ENCODE measurements at regions of chr21 and their contacts with region 1.

Region 1: GRCh38 chr21:23394458-23394857 is 2212.8 kb downstream of the MRPL39 start:
- DNase-seq: peak; percentile 25
- ATAC-seq: peak; percentile 40
- H3K4me3 ChIP-seq: no peak overlapping the region
- H3K27ac ChIP-seq: no peak overlapping the region
- H3K4me1 ChIP-seq: no peaks in the 10 kb centered on the region
- H3K27me3 ChIP-seq: no peaks in the 10 kb centered on the region
- CTCF ChIP-seq: peak; percentile 61

Region 2: DNA sequence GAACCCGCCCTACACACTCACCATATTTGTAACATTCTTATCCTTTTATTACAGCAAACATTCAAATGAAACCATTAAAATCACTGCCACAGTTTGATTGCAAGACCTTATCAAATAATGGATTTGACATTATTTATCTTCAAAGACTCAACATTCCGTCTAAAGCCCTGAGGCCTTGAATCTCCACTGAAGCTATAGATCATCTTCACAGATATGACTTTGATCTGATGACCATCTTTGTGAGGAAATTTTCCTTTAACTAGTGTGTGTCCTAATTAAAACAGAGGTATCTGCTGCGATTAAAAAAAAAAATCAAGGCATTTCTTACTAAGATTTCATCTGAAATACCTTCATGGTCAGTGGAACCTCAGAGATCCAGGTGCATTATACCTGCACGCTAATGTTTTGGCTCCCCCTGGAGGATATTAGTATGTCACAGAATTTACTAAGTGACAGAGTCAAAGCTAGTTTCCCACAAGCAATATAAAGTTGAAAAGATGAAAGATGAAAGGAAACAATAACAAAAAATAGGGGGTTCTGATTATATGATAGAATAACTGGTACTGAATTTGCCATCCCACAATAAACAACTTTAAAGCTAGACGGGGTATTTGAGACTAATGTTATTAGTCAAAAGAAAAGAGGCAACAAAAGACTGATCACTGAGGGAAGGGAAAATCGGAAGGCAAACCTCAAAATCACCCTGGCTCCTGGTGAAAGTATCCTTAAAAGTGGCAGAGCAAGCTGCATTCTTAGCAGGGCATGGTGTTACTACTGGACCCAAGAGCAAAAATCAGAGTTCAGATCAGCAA is 1472.8 kb before region 1 on chr21:
- CTCF ChIA-PET with region 1: no interaction called
- POLR2A ChIA-PET with region 1: no interaction called
- intact Hi-C with region 1: loop called (anchors 10 kb)
- DNase-seq: peak; percentile 65
- ATAC-seq: peak; percentile 64
- H3K4me3 ChIP-seq: peak overlapping the region; percentile 33
- H3K27ac ChIP-seq: no peak overlapping the region
- H3K4me1 ChIP-seq: no peaks in the 10 kb centered on the region
- H3K27me3 ChIP-seq: no peaks in the 10 kb centered on the region
- CTCF ChIP-seq: peak; percentile 88

Region 3: GRCh38 chr21:22575165-22575584 is 819.3 kb before region 1 on chr21:
- CTCF ChIA-PET with region 1: no interaction called
- POLR2A ChIA-PET with region 1: no interaction called
- intact Hi-C with region 1: loop called (anchors 5 kb)
- DNase-seq: peak; percentile 47
- ATAC-seq: peak; percentile 85
- H3K4me3 ChIP-seq: peak overlapping the region; percentile 43
- H3K27ac ChIP-seq: no peak overlapping the region
- H3K4me1 ChIP-seq: no peaks in the 10 kb centered on the region
- H3K27me3 ChIP-seq: no peaks in the 10 kb centered on the region
- CTCF ChIP-seq: peak; percentile 75

Region 4: GRCh38 chr21:23131171-23131570 is 263.3 kb before region 1 on chr21:
- CTCF ChIA-PET with region 1: no interaction called
- POLR2A ChIA-PET with region 1: no interaction called
- intact Hi-C with region 1: loop called (anchors 2 kb)
- DNase-seq: peak; percentile 45
- ATAC-seq: peak; percentile 60
- H3K4me3 ChIP-seq: no peak overlapping the region
- H3K27ac ChIP-seq: no peak overlapping the region
- H3K4me1 ChIP-seq: peaks cover 7% of the 10 kb centered on the region
- H3K27me3 ChIP-seq: no peaks in the 10 kb centered on the region
- CTCF ChIP-seq: peak; percentile 67

Region 5: DNA sequence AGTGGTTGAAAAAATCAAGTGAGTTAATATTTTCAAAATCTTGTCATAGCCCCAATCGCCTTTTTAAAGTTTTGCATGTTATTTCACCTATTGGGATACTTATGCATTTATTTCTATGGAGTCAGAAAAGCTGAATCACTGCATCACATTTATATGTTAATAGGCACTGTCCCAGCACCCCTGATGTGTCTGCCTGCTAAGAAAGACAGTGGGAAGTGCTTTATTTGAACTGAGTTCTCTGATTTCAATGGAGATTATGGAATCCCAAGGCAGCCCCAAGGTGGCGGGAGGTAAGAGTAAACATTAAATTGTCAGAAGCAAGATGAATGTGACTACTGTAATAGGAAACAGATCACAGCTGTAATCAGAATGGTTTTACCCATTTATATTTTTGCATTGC is 170.6 kb before region 1 on chr21:
- CTCF ChIA-PET with region 1: no interaction called
- POLR2A ChIA-PET with region 1: no interaction called
- intact Hi-C with region 1: no loop called
- DNase-seq: no peak
- ATAC-seq: no peak
- H3K4me3 ChIP-seq: no peak overlapping the region
- H3K27ac ChIP-seq: no peak overlapping the region
- H3K4me1 ChIP-seq: peaks cover 5% of the 10 kb centered on the region; the same call in 1 of the 2 replicates
- H3K27me3 ChIP-seq: no peaks in the 10 kb centered on the region
- CTCF ChIP-seq: no peak